ENCODE measurements at regions of chr19 and their contacts with region 1.

Region 1: DNA sequence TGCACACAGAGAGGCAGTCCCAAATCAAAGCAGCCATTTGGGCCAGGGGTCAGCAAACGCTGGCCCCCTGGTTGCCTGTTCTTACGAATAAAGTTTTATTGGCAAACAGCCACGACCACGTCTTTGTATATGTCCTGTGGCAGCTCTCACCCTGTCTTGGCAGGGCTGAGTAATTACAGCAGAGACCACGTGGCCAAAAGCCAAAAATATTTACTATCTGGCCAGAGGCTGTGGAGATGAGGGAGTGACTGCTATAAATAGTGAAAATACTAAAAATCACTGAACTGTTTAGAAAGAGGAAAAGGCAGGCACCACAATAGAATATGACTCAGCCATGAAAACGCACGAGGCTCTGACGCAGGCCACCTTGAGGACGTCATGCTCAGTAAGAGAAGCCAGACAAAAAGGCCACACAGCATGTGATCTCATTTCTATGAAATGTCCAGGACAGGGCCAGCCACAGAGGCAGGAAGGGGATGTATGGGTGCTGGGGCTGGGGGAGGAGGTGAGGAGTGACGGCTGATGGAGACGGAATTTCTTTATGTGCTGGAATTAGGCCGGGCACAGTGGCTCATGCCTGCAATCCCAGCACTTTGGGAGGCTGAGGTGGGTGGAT is 29.4 kb downstream of the SMIM24 start:
- DNase-seq: peak; percentile 80 to 93
- ATAC-seq: peak; percentile 87 to 92
- H3K4me3 ChIP-seq: no peak overlapping the region
- H3K27ac ChIP-seq: peak overlapping the region; percentile 88 to 91 (median 89)
- H3K4me1 ChIP-seq: peaks cover 5 to 13% of the 10 kb centered on the region in 2 donors
- H3K27me3 ChIP-seq: no peaks in the 10 kb centered on the region
- CTCF ChIP-seq: no peak
- POLR2A ChIP-seq: peak in 1 of 2 donors; percentile 47

Region 2: GRCh38 chr19:3006075-3006767 is 444.7 kb before region 1 on chr19:
- in situ Hi-C with region 1: no loop called
- intact Hi-C with region 1: no loop called
- DNase-seq: no peak
- ATAC-seq: no peak
- H3K4me3 ChIP-seq: no peak overlapping the region
- H3K27ac ChIP-seq: no peak overlapping the region
- H3K4me1 ChIP-seq: no peaks in the 10 kb centered on the region
- H3K27me3 ChIP-seq: no peaks in the 10 kb centered on the region
- CTCF ChIP-seq: no peak
- POLR2A ChIP-seq: no peak

Region 3: DNA sequence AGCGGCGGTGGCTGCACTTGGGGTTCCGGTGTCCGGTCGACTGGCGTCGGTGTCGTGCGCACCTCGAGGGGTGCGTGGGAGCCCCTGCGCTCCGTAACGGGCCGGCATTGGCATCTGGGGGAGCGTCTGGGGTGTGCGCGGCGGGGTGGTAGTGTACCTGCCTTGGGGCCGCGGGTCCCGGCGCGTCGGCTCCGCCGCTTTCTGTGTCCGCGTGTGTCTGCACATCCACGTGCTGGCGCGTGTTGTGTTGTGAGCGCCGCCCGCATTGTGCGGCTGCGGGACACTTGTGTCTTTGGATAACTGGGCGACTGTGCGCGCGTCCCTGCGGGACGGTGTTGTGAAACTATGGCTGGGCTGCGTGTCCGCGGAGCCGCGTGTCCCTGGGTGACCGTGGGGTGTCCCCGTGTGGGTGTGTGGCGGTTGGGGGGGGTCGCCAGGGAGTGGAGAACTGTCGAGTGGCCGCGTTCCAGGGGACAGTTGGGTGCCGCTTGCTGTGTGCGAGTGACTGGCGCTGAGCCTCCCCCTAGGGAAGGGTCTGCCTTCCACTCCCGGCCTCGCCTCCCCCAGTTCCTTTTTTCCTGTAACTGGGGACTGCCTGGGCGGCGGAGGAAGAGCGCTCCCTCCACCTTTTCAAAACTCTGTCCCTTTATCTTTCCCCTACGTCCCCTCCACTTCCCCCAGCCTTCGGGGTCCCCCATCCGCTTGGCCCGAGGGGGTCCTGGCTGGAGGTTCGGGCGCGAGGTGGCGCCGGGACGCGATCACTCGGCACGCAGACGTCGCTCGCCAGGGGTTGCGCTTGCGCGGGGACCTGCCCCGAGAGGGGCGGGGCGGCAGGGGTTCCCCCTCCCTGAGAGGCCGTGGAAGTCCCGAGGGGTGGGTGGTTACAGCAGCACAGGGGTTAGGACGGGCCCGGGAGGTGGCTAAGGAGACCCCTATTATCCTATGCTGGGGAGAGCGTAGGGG is 90.2 kb before region 1 on chr19:
- in situ Hi-C with region 1: no loop called
- intact Hi-C with region 1: loop called (anchors 5 kb)
- DNase-seq: peak; percentile 75 to 86
- ATAC-seq: peak; percentile 50 to 52
- H3K4me3 ChIP-seq: peak overlapping the region; percentile 71 to 90 (median 84)
- H3K27ac ChIP-seq: peak overlapping the region; percentile 92 to 99 (median 98)
- H3K4me1 ChIP-seq: peaks cover 27 to 28% of the 10 kb centered on the region in 2 donors
- H3K27me3 ChIP-seq: no peaks in the 10 kb centered on the region
- CTCF ChIP-seq: peak in 3 of 5 experiments; percentile 27 to 40 (median 36)
- POLR2A ChIP-seq: peak; percentile 84 to 90

Region 4: DNA sequence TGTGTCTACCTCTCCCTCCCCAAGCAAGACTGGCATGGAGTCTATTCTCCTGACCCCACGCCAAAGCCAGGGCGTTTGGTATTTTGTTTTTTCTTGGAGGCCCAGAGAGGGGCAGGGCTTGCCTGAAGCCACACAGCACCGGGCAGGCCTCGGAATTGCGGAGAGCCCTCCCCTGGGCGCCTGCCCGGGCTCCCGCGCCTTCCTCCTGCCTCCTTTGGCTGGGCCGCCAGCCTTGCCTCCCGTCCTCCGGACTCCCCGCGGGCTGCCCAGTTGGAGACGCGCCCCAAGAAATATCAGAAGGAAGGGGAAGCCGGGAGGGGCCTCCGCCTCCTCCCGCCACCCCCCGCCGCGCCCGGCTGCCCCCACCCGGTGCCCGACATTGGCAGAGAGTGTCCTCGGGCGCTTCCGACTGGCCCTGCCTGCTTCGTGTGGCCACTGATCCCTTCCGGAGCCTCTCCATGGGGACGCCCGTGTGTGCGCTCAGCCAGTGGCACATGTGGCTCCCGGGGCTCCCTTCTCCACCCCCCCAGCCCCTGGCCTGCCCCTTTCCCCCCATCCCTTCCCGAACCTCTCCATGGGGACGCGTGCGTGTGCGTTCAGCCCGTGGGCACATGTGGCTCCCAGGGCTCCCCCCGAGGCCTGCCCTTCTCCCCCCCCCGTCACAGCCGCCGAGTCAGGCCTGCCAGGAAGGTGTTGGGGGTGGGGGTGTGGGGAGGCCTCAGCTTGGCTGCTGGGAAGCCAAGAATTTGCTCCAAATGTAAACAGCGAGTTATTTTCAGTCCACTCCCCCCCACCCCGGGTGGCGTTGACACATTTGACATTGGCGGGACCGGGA is 47.2 kb before region 1 on chr19:
- in situ Hi-C with region 1: no loop called
- intact Hi-C with region 1: loop called (anchors 2 kb)
- DNase-seq: peak; percentile 89 to 94
- ATAC-seq: peak; percentile 38 to 46
- H3K4me3 ChIP-seq: peak overlapping the region; percentile 56 to 60 (median 58)
- H3K27ac ChIP-seq: peak overlapping the region; percentile 98 to 100 (median 98)
- H3K4me1 ChIP-seq: peaks cover 63 to 81% of the 10 kb centered on the region in 2 donors
- H3K27me3 ChIP-seq: no peaks in the 10 kb centered on the region
- CTCF ChIP-seq: no peak
- POLR2A ChIP-seq: peak; percentile 31 to 39

Measured in gastrocnemius medialis (tissue), 4 donors.